GM12878 (cell line): ENCODE measurements at regions of chr5 and their contacts with region 1.

Region 1: DNA sequence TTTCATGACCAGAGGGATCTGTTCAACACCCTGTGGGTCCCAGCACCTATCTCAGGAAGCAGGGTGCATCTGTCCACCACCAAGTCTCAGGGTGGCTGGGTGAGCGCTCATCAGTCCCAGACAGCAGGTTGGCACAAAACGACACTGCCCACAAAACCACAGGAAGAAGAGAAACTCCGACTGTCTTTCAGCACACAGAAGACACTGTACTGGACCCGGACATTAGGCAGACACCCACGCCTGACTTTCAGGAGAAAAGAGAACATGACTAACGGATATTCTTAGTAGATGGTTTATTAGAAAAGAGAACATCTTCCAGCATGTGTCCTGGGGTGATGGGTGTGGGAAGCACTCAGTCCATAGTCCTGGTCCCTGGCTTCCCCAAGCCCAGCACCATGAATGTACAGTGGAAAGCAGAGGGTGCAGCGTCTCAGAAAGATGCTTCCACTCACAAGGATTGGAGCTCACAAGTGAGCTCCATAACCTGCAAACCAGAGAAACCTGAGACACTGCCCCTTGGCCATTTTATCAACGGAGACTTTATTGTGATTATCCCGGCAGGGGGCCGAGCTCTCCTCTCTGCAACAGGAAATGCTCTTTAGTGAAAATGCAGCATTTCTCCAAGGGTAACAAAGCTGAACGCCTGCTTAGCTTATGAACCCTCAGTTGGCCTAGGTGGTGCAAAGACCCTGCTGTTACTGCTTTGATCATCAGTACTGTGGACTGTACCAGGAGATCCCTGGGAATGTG is 35.8 kb upstream of the LCP2 start:
- DNase-seq: peak; percentile 79
- ATAC-seq: peak; percentile 54
- H3K4me3 ChIP-seq: no peak overlapping the region
- H3K27ac ChIP-seq: 0 out of 2 replicates have a peak overlapping the region, but pooled peaks have one; percentile 5
- H3K4me1 ChIP-seq: peaks cover 46% of the 10 kb centered on the region
- H3K27me3 ChIP-seq: no peaks in the 10 kb centered on the region
- CTCF ChIP-seq: no peak
- EP300 ChIP-seq: 0 out of 4 replicates have a peak, but pooled peaks of 1 of the 2 experiments have one; percentile 28
- POLR2A ChIP-seq: no peak
- RAD21 ChIP-seq: 0 out of 2 replicates have a peak, but pooled peaks have one; percentile 4

Region 2: GRCh38 chr5:170135796-170136579 is 197.3 kb before region 1 on chr5:
- CTCF ChIA-PET with region 1: no interaction called
- POLR2A ChIA-PET with region 1: no interaction called
- RAD21 ChIA-PET with region 1: no interaction called
- SMC1A ChIA-PET with region 1: no interaction called
- in situ Hi-C with region 1: no loop called
- intact Hi-C with region 1: no loop called
- DNase-seq: no peak
- ATAC-seq: no peak
- H3K4me3 ChIP-seq: no peak overlapping the region
- H3K27ac ChIP-seq: no peak overlapping the region
- H3K4me1 ChIP-seq: no peaks in the 10 kb centered on the region
- H3K27me3 ChIP-seq: peaks cover 2 to 3% of the 10 kb centered on the region in 2 experiments; a peak in 1 of 4 replicates
- CTCF ChIP-seq: no peak
- EP300 ChIP-seq: no peak
- POLR2A ChIP-seq: no peak
- RAD21 ChIP-seq: no peak

Region 3: GRCh38 chr5:170200876-170201275 is 132.5 kb before region 1 on chr5:
- CTCF ChIA-PET with region 1: no interaction called
- POLR2A ChIA-PET with region 1: no interaction called
- RAD21 ChIA-PET with region 1: no interaction called
- SMC1A ChIA-PET with region 1: no interaction called
- in situ Hi-C with region 1: no loop called
- intact Hi-C with region 1: no loop called
- DNase-seq: no peak
- ATAC-seq: no peak
- H3K4me3 ChIP-seq: no peak overlapping the region
- H3K27ac ChIP-seq: no peak overlapping the region
- H3K4me1 ChIP-seq: no peaks in the 10 kb centered on the region
- H3K27me3 ChIP-seq: peaks cover 2 to 5% of the 10 kb centered on the region in 2 experiments; a peak in 3 of 4 replicates
- CTCF ChIP-seq: no peak
- EP300 ChIP-seq: no peak
- POLR2A ChIP-seq: no peak
- RAD21 ChIP-seq: no peak

Region 4: GRCh38 chr5:170293273-170293672 is 40.1 kb before region 1 on chr5:
- CTCF ChIA-PET with region 1: interaction called, 139 read pairs
- POLR2A ChIA-PET with region 1: interaction called, 169 read pairs
- RAD21 ChIA-PET with region 1: interaction called, 274 read pairs
- SMC1A ChIA-PET with region 1: interaction called, 274 read pairs
- in situ Hi-C with region 1: no loop called
- intact Hi-C with region 1: loop called (anchors 1 kb)
- DNase-seq: peak; percentile 87
- ATAC-seq: peak; percentile 86
- H3K4me3 ChIP-seq: peak overlapping the region; percentile 77
- H3K27ac ChIP-seq: no peak overlapping the region
- H3K4me1 ChIP-seq: peaks cover 15% of the 10 kb centered on the region
- H3K27me3 ChIP-seq: no peaks in the 10 kb centered on the region
- CTCF ChIP-seq: peak in 1 of 3 experiments; percentile 19; a peak in 1 of 6 replicates
- EP300 ChIP-seq: peak in 1 of 2 experiments; percentile 80; a peak in 2 of 4 replicates
- POLR2A ChIP-seq: no peak
- RAD21 ChIP-seq: peak; percentile 34; the same call in 1 of the 2 replicates

Region 5: GRCh38 chr5:170312666-170313065 is 20.7 kb before region 1 on chr5:
- CTCF ChIA-PET with region 1: interaction called, 21 read pairs
- POLR2A ChIA-PET with region 1: interaction called, 7 read pairs
- RAD21 ChIA-PET with region 1: interaction called, 18 read pairs
- SMC1A ChIA-PET with region 1: interaction called, 52 read pairs
- in situ Hi-C with region 1: no loop called
- intact Hi-C with region 1: no loop called
- DNase-seq: no peak
- ATAC-seq: peak; percentile 75
- H3K4me3 ChIP-seq: no peak overlapping the region
- H3K27ac ChIP-seq: no peak overlapping the region
- H3K4me1 ChIP-seq: peaks cover 11% of the 10 kb centered on the region
- H3K27me3 ChIP-seq: no peaks in the 10 kb centered on the region
- CTCF ChIP-seq: no peak
- EP300 ChIP-seq: no peak
- POLR2A ChIP-seq: no peak
- RAD21 ChIP-seq: no peak

Region 6: GRCh38 chr5:170348137-170348633 is 14.8 kb after region 1 on chr5:
- CTCF ChIA-PET with region 1: interaction called, 10 read pairs
- POLR2A ChIA-PET with region 1: interaction called, 4 read pairs
- RAD21 ChIA-PET with region 1: interaction called, 13 read pairs
- SMC1A ChIA-PET with region 1: interaction called, 16 read pairs
- in situ Hi-C with region 1: no loop called
- intact Hi-C with region 1: no loop called
- DNase-seq: no peak
- ATAC-seq: peak; percentile 23; the same call in 2 of the 3 replicates
- H3K4me3 ChIP-seq: no peak overlapping the region
- H3K27ac ChIP-seq: no peak overlapping the region
- H3K4me1 ChIP-seq: peaks cover 2% of the 10 kb centered on the region; the same call in 1 of the 2 replicates
- H3K27me3 ChIP-seq: peaks cover 1 to 15% of the 10 kb centered on the region in 2 experiments; a peak in 2 of 4 replicates
- CTCF ChIP-seq: peak in 1 of 3 experiments; percentile 21; a peak in 1 of 6 replicates
- EP300 ChIP-seq: no peak
- POLR2A ChIP-seq: no peak
- RAD21 ChIP-seq: peak; percentile 49